ENCODE measurements at regions of chr2 and their contacts with region 1.

Region 1: GRCh38 chr2:64523666-64524603 is at the start of gene AFTPH:
- DNase-seq: peak; percentile 100
- H3K4me3 Mint-ChIP-seq: peak within 1 kb of the TSS; percentile 99
- H3K27ac Mint-ChIP-seq: peak within 1 kb of the TSS; percentile 100
- H3K4me1 Mint-ChIP-seq: peaks cover 39% of the 10 kb centered on the region
- H3K27me3 Mint-ChIP-seq: peaks cover 2% of the 10 kb centered on the region
- total RNA-seq, gene AFTPH: 42.4 and 43.4 TPM in 2 replicates

Region 2: DNA sequence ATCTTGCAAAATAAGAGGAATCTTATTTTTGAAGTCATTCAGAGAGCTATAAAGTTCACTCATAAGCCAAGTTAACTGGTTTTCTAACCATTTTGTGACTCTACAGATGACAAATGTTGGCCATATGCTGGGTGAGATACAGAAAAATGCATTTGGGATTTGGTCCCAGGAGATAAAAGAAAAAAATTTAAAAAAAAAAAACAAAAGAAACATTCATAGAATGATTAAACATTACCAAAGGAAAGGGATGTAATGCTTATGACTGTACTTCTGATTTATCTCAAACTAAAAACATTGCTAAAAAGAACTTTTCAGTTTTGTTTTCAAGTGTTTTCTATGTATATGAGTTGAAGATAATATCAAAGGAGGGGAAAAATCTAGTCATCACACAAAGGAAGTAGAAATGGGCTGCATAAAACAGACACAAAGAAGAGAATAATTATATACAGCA is 422.8 kb before region 1 on chr2:
- intact Hi-C with region 1: loop called (anchors 1 kb)
- DNase-seq: no peak
- H3K4me3 Mint-ChIP-seq: no peak overlapping the region
- H3K27ac Mint-ChIP-seq: peak overlapping the region; percentile 76
- H3K4me1 Mint-ChIP-seq: peaks cover 54% of the 10 kb centered on the region
- H3K27me3 Mint-ChIP-seq: no peaks in the 10 kb centered on the region

Region 3: DNA sequence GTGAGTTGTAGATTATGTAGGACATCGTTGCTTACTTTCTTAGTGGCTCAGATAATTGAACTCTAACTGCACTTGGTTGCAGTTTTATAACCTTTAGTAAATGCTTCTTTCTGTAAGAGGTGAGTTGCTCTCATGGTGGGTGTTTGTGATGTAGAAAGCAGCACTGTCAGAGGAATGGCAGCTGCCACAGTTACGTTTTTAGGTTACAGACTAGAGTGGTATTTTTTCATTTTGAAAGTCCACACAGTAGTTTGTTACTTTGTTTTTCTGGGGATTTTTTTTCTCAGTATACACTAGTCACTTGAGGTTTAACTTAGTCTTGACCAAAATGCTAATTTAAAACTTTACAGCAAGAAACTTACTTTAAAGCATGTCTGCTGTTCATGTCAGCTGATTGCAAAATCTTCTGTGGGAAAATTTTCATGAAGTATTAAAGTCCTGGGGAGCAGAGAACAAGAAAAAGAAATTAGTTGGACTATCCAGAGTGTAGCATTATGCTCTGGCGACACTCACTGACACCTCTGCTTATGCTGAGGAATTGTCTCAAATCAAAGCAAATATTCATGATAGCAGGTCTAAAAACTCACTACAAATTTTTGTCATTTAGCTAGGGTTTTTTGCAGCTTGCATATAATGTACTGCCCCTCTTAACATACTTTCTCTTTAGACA is 15.0 kb after region 1 on chr2:
- intact Hi-C with region 1: loop called (anchors 1 kb)
- DNase-seq: no peak
- H3K4me3 Mint-ChIP-seq: peak overlapping the region; percentile 45
- H3K27ac Mint-ChIP-seq: peak overlapping the region; percentile 71
- H3K4me1 Mint-ChIP-seq: peaks cover 74% of the 10 kb centered on the region
- H3K27me3 Mint-ChIP-seq: no peaks in the 10 kb centered on the region

Region 4: GRCh38 chr2:64653349-64654062 is 129.6 kb after region 1 on chr2 and contains the start of gene SERTAD2:
- intact Hi-C with region 1: loop called (anchors 2 kb)
- DNase-seq: peak; percentile 83
- H3K4me3 Mint-ChIP-seq: peak within 1 kb of the TSS; percentile 90
- H3K27ac Mint-ChIP-seq: peak within 1 kb of the TSS; percentile 90
- H3K4me1 Mint-ChIP-seq: peaks cover 71% of the 10 kb centered on the region
- H3K27me3 Mint-ChIP-seq: no peaks in the 10 kb centered on the region
- total RNA-seq, gene SERTAD2: 27.3 and 28.5 TPM in 2 replicates

Region 5: GRCh38 chr2:64873472-64873924 is 349.6 kb after region 1 on chr2:
- intact Hi-C with region 1: loop called (anchors 1 kb)
- DNase-seq: peak; percentile 74
- H3K4me3 Mint-ChIP-seq: no peak overlapping the region
- H3K27ac Mint-ChIP-seq: no peak overlapping the region
- H3K4me1 Mint-ChIP-seq: peaks cover 8% of the 10 kb centered on the region
- H3K27me3 Mint-ChIP-seq: peaks cover 26% of the 10 kb centered on the region

Region 6: GRCh38 chr2:65227425-65228262 is 703.7 kb after region 1 on chr2 and contains the start of gene ACTR2:
- intact Hi-C with region 1: loop called (anchors 1 kb)
- DNase-seq: peak; percentile 95
- H3K4me3 Mint-ChIP-seq: peak within 1 kb of the TSS; percentile 98
- H3K27ac Mint-ChIP-seq: peak within 1 kb of the TSS; percentile 99
- H3K4me1 Mint-ChIP-seq: peaks cover 36% of the 10 kb centered on the region
- H3K27me3 Mint-ChIP-seq: no peaks in the 10 kb centered on the region
- total RNA-seq, gene ACTR2: 285 and 295 TPM in 2 replicates

Measured in activated T-helper 1 cell treated with anti-CD3 and anti-CD28 coated beads, Interleukin-12 subunit alpha, Interleukin-12 subunit beta, Interleukin-2, Interleukin-4 antibody, amounts not matched to agents 30 ng/mL and 10 ng/mL and 1 ng/mL, durations not matched to agents 14 hours and 24 hours and 36 hours (primary cell).